Activated CD4-positive, alpha-beta T cell treated with anti-CD3 and anti-CD28 coated beads, Interleukin-2, amount 10 ng/mL, durations not matched to agents 24 days and 14 days (primary cell): ENCODE measurements at regions of chr11 and their contacts with region 1.

Region 1: GRCh38 chr11:126716456-126717083 is 284.0 kb downstream of the KIRREL3 start:
- DNase-seq: peak; percentile 72
- H3K4me3 Mint-ChIP-seq: no peak overlapping the region
- H3K27ac Mint-ChIP-seq: no peak overlapping the region
- H3K4me1 Mint-ChIP-seq: no peaks in the 10 kb centered on the region
- H3K27me3 Mint-ChIP-seq: peaks cover 7% of the 10 kb centered on the region

Region 2: GRCh38 chr11:126989942-126990715 is 273.6 kb after region 1 on chr11:
- intact Hi-C with region 1: loop called (anchors 1 kb)
- DNase-seq: peak; percentile 87
- H3K4me3 Mint-ChIP-seq: no peak overlapping the region
- H3K27ac Mint-ChIP-seq: no peak overlapping the region
- H3K4me1 Mint-ChIP-seq: no peaks in the 10 kb centered on the region
- H3K27me3 Mint-ChIP-seq: peaks cover 4% of the 10 kb centered on the region